Activated naive CD4-positive, alpha-beta T cell treated with anti-CD3 and anti-CD28 coated beads for 36 hours (primary cell): ENCODE measurements at regions of chr13 and their contacts with region 1.

Region 1: GRCh38 chr13:99033814-99034213 is 56.0 kb upstream of the DOCK9 start:
- DNase-seq: no peak
- H3K4me3 Mint-ChIP-seq: no peak overlapping the region
- H3K27ac Mint-ChIP-seq: no peak overlapping the region
- H3K4me1 Mint-ChIP-seq: peaks cover 45% of the 10 kb centered on the region
- H3K27me3 Mint-ChIP-seq: no peaks in the 10 kb centered on the region

Region 2: DNA sequence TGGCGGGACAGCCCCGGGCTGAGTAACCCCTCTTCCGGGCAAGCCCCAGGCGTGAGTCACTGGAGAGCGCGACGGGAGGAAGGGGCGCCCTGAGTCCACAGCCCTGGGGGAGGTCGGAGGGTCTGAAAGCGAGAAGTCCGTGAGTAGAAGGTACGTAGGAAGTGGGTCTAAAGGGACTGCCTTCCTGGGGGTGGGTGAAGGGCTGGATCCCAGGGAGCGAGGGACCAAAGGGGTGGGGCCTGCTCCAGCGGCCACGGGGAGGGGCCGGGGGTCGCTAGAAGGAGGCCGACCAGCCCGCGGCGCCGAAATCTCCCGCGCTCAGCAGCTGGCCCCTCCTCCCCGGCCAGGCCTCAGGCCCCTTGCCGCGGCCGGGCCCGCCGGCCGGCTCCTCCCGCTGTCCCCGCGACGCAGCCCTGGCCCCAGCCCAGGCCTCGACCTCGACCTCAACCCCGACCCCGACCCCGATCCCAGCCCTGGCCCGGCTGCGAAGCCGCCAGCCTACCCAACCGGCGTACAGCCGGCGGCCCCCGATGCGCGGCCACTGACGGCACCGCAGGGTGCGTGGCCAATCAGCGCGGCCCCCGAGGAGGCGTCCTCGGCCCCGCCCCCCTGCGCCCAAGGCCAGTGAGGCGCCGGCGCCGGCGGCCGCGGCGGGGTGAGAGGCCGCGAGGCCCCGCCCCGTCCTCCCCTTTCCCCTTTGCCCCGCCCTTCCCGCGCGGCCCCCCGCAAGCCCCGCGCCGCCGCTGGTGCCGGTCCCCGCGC is 1057.8 kb before region 1 on chr13:
- CTCF ChIA-PET with region 1: no interaction called
- intact Hi-C with region 1: loop called (anchors 10 kb)
- DNase-seq: peak; percentile 89
- H3K4me3 Mint-ChIP-seq: peak overlapping the region; percentile 92
- H3K27ac Mint-ChIP-seq: peak overlapping the region; percentile 97
- H3K4me1 Mint-ChIP-seq: peaks cover 28% of the 10 kb centered on the region
- H3K27me3 Mint-ChIP-seq: no peaks in the 10 kb centered on the region

Region 3: GRCh38 chr13:98842864-98843481 is 190.8 kb before region 1 on chr13:
- CTCF ChIA-PET with region 1: interaction called, 8 read pairs
- intact Hi-C with region 1: loop called (anchors 1 kb)
- DNase-seq: peak; percentile 85
- H3K4me3 Mint-ChIP-seq: no peak overlapping the region
- H3K27ac Mint-ChIP-seq: no peak overlapping the region
- H3K4me1 Mint-ChIP-seq: peaks cover 6% of the 10 kb centered on the region
- H3K27me3 Mint-ChIP-seq: no peaks in the 10 kb centered on the region

Region 4: GRCh38 chr13:98869408-98870090 is 164.3 kb before region 1 on chr13:
- CTCF ChIA-PET with region 1: interaction called, 14 read pairs
- intact Hi-C with region 1: loop called (anchors 1 kb)
- DNase-seq: no peak
- H3K4me3 Mint-ChIP-seq: no peak overlapping the region
- H3K27ac Mint-ChIP-seq: no peak overlapping the region
- H3K4me1 Mint-ChIP-seq: peaks cover 11% of the 10 kb centered on the region
- H3K27me3 Mint-ChIP-seq: no peaks in the 10 kb centered on the region

Region 5: DNA sequence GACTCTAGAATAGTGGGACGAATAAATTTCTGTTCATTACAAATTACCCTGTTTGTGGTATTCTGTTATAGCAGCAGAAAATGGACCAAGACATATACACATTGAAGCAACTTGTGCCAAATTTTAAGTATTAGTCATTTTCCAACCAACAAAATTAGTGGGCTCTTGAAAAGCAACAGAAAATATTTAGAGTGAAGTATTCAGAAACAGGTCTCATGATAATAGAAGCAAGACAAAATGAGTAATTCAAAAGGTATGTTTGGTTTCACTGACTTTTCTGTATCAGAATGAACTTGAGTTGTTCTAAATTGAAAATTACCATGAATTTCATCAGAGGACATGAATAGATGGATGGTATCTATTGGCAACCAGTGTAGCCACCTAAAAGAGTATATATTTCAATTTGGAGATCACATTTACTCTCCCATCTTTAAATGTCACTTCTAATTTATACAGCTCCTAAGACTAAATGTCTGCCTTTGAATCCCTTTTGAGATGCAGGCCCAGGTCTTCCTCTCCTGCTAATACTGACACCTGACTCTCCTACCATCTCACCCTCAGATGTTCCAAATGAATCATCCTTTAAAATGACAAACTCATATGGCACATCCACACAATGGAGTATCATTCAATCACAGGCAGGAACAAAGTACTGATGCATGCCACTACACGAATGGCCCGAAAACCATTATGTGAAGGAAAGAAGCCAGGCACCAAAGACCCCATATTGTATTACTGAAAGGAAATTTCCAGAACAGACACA is 15.2 kb before region 1 on chr13:
- CTCF ChIA-PET with region 1: interaction called, 13 read pairs
- intact Hi-C with region 1: no loop called
- DNase-seq: no peak
- H3K4me3 Mint-ChIP-seq: no peak overlapping the region
- H3K27ac Mint-ChIP-seq: peak overlapping the region; percentile 75
- H3K4me1 Mint-ChIP-seq: peaks cover 68% of the 10 kb centered on the region
- H3K27me3 Mint-ChIP-seq: no peaks in the 10 kb centered on the region

Region 6: GRCh38 chr13:99051768-99052455 is 18.1 kb after region 1 on chr13:
- CTCF ChIA-PET with region 1: interaction called, 27 read pairs
- intact Hi-C with region 1: no loop called
- DNase-seq: no peak
- H3K4me3 Mint-ChIP-seq: peak overlapping the region; percentile 33
- H3K27ac Mint-ChIP-seq: peak overlapping the region; percentile 77
- H3K4me1 Mint-ChIP-seq: peaks cover 80% of the 10 kb centered on the region
- H3K27me3 Mint-ChIP-seq: no peaks in the 10 kb centered on the region

Region 7: DNA sequence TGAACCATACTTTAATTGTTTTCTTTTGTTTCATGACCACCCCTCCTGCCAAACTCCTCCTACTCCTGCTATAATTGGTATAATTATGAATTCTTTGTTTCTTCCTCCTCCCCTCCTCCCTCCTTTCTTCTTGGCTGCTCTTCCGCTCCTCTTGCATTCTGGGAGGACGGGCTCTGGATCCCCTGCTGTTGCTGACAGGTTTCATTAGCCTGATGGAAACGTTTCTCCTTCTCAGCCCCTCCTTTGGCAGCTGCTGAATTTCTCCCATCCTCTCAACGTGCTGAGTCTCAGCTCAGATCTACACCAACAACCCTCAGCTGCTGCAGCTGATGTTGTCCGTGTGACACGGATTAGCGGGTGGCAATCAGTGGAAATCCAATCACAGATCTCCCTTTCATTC is 69.7 kb after region 1 on chr13:
- CTCF ChIA-PET with region 1: no interaction called
- intact Hi-C with region 1: no loop called
- DNase-seq: no peak
- H3K4me3 Mint-ChIP-seq: no peak overlapping the region
- H3K27ac Mint-ChIP-seq: no peak overlapping the region
- H3K4me1 Mint-ChIP-seq: peaks cover 3% of the 10 kb centered on the region
- H3K27me3 Mint-ChIP-seq: no peaks in the 10 kb centered on the region